Right cardiac atrium (tissue), 5 donors: ENCODE measurements at regions of chr6 and their contacts with region 1.

Region 1: DNA sequence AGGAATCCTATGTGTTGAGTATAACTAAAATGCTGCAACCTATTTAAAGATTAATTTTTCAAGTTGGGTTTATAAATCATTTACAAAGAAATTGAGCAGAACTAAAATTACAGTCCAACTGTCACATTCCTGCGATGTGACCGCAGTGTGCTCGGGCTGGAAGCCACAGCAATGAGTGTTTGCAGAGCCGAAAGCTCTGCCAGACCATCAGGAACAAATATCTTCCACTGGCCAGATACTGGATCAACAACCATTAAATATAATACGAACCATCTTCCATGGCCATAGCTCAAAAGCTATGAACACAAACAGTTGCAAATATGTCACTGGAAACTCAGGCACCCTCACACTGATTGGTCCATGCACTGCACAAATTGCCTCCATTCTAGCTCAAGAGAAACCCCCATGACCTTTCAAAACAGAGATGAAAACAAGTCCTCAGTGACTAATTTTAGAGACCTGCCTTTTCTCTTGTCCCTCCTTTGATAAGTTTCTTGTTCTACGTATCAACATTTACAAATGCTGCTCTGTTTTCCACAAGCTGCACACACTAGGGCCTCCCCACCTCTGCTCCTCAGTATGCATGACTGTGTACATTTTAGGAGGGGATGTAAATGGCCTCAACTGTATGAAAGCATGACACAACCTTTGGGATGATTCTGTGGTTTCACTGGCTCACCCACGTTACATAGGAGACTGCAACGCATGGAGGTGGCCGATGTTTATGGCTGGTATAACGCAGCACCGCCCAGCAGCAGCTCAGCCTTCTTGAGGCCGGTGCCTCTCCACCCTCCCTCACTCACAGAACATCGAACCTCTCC is 171.7 kb downstream of the WDR27 start:
- DNase-seq: peak in 1 of 3 donors; percentile 73
- ATAC-seq: peak; percentile 41 to 75
- H3K4me3 ChIP-seq: no peak overlapping the region
- H3K27ac ChIP-seq: no peak overlapping the region
- H3K4me1 ChIP-seq: no peaks in the 10 kb centered on the region
- H3K27me3 ChIP-seq: no peaks in the 10 kb centered on the region

Region 2: DNA sequence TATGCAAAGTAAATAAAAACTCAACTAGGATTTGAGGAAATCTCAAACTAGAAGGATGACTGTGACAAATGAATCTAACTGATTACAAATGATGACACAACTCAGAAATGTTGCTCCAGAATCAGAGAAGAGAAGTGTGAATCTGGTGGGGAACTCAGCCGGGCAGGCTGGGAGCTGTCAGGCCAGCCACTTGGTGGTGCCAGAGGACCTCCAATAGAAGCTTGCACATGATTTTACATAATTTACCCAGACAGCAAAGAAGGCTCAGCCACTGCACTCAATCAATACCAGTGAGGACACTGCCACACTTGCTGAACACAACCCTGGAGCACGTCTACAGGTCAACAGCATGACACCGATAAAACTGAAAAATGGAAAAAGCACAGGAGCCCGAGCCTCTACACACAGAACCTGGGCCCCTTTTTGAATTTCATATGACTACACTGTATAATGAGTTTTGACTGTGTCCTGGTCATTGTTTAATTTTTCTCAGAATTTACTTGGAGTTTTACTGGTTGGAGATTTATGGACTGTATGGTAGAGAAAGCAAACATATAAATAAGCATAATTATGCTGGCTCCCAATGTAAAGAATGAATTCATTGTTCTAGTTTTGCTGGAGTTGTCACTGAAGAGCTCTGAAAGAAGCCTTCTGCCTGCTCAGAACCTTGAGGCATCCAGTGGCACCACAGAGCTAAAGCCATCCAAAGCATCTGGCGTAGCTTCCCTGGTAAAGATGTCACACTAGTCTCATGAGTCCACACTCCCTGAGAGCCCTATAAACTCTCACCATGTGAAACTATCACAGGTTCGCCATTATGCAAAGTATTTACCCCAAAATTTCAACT is 573.0 kb before region 1 on chr6:
- intact Hi-C with region 1: loop called in 2 of 4 experiments (anchors 10 kb)
- DNase-seq: peak; percentile 77 to 83 (median 79)
- ATAC-seq: peak; percentile 87 to 91
- H3K4me3 ChIP-seq: no peak overlapping the region
- H3K27ac ChIP-seq: no peak overlapping the region
- H3K4me1 ChIP-seq: no peaks in the 10 kb centered on the region
- H3K27me3 ChIP-seq: no peaks in the 10 kb centered on the region

Region 3: DNA sequence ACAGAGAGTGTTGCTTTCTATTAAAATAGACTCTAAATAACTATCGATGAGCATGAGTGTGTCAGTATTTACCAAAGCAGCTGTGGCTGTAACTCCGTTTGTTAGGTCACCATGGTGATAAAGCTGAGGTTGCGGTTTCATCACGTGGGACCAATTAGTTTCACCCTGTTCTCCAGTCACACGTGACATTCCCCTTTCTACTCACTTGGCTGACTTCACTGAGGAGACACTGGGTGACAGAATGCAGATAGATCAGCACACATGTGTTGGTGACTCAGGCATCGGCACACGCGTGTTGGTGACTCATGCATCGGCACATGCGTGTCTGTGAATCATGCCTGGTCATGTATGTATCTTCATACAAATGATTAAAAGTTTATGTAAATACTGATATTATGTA is 561.9 kb before region 1 on chr6:
- intact Hi-C with region 1: loop called in 1 of 4 experiments (anchors 10 kb)
- DNase-seq: peak; percentile 34 to 69 (median 64)
- ATAC-seq: peak; percentile 84 to 87
- H3K4me3 ChIP-seq: no peak overlapping the region
- H3K27ac ChIP-seq: no peak overlapping the region
- H3K4me1 ChIP-seq: no peaks in the 10 kb centered on the region
- H3K27me3 ChIP-seq: no peaks in the 10 kb centered on the region